ENCODE measurements at regions of chr4 and their contacts with region 1.

Region 1: GRCh38 chr4:15001869-15002658 is at the start of gene CPEB2:
- DNase-seq: peak; percentile 93
- H3K4me3 Mint-ChIP-seq: peak within 1 kb of the TSS; percentile 87
- H3K27ac Mint-ChIP-seq: peak within 1 kb of the TSS; percentile 97
- H3K4me1 Mint-ChIP-seq: peaks cover 25% of the 10 kb centered on the region
- H3K27me3 Mint-ChIP-seq: no peaks in the 10 kb centered on the region
- total RNA-seq, gene CPEB2: 17.6 to 20.4 TPM

Region 2: DNA sequence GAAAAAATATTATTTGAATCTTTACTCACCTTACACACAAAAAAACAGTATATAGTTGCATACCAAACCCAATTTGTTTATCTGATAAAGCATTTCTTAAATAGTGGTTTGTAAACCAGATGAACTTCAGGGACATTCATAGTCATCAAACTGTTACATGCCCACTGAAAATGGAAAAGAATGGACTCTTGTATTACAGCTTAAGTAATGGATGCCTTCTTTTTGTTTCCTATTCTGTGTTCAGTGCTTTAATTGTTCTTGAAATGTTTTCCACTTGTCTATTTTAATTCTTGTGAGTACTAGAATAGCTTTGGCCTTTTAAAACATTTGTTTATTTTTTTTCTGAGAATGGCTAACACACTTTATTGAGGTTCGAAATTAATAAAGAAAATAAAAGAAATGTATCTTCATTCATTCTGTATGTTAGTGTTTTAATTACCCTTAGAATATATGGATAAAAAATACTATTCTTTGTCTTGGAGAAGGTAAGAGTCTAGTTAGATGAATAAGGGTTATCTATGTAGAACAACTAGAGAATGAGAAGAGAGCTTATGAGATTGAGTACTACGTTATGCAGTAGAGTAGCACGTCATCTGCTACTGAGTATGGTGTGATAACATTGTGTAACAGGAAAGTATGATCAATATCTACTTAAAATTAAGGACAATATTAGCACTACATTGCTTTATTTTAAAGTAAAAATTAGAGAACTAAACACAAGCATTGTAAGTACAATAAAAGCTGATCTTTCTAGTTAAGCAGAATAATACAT is 10.1 kb after region 1 on chr4:
- CTCF ChIA-PET with region 1: interaction called, 4 read pairs
- POLR2A ChIA-PET with region 1: interaction called, 11 read pairs
- DNase-seq: no peak
- H3K4me3 Mint-ChIP-seq: no peak overlapping the region
- H3K27ac Mint-ChIP-seq: no peak overlapping the region
- H3K4me1 Mint-ChIP-seq: peaks cover 26% of the 10 kb centered on the region
- H3K27me3 Mint-ChIP-seq: no peaks in the 10 kb centered on the region

Region 3: DNA sequence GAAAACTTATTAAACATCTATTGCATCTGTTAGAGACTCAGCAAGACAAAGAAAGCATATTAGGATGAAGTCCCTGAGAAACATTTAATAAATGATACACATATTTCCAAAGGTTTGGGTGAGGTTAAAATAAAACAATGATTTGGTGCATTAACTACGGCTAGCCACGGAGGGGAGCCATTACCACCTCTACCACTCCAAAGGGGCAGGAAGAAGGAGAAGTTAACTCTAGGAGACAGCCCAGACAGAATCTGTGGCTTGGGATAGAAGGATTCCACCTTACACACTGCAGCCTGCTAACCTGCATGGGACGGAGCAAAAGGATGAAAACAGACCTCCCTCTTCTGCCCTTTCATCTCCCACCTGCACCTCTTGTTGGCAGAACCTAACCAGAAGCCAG is 236.7 kb after region 1 on chr4:
- CTCF ChIA-PET with region 1: no interaction called
- POLR2A ChIA-PET with region 1: no interaction called
- DNase-seq: peak; percentile 31
- H3K4me3 Mint-ChIP-seq: no peak overlapping the region
- H3K27ac Mint-ChIP-seq: no peak overlapping the region
- H3K4me1 Mint-ChIP-seq: peaks cover 9% of the 10 kb centered on the region
- H3K27me3 Mint-ChIP-seq: peaks cover 3% of the 10 kb centered on the region